ENCODE measurements at regions of chr21 and their contacts with region 1.

Region 1: DNA sequence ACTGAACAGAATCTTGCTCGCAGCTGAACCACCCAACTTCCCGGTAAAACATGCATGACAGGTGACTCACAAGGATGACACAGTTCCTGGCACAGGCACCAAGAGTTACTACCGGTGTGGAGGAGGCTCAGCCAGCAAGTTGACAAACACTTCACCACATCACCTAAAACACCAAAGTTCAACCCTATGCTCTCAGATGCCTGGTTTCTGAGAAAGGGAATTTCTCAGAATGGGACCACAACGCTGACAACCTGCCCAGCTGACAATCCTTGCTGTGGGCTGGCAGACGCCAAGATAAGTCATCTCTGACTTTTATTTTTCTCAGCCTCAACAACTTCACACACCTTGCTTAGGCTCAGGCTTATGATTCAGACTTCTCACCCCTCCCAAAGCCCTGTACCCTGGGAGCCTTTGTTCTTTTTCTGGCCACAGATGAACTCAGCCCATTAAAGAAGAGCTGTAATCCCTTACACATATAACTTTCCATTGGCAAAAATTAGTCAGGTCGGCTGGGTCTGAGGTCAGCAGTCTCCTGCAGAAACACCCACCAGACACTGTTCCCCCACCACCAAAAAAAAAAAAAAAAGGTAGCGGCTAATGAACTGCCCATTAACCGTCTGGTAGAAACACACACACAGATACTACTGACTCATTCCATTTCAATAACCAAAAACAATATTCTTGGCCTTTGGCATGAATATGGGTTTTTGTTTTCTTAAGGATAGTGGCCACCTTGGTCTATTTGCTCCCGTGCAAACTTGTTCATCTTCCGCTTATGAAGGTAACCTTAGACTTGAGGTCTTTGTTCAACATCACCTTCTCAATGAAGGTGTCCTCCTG is 10.8 kb upstream of the TIAM1 start:
- DNase-seq: peak; percentile 88
- ATAC-seq: peak; percentile 88
- H3K4me3 Mint-ChIP-seq: peak overlapping the region; percentile 49
- H3K27ac Mint-ChIP-seq: peak overlapping the region; percentile 82
- H3K4me1 Mint-ChIP-seq: peaks cover 53% of the 10 kb centered on the region
- H3K27me3 Mint-ChIP-seq: no peaks in the 10 kb centered on the region

Region 2: GRCh38 chr21:30718239-30718909 is 636.5 kb before region 1 on chr21 and contains the start of gene KRTAP21-3:
- CTCF ChIA-PET with region 1: no interaction called
- POLR2A ChIA-PET with region 1: no interaction called
- intact Hi-C with region 1: loop called in 1 of 2 experiments (anchors 1 kb)
- DNase-seq: peak; percentile 22
- ATAC-seq: peak; percentile 92
- H3K4me3 Mint-ChIP-seq: no peak within 1 kb of the TSS
- H3K27ac Mint-ChIP-seq: peak within 1 kb of the TSS; percentile 75
- H3K4me1 Mint-ChIP-seq: peaks cover 22% of the 10 kb centered on the region
- H3K27me3 Mint-ChIP-seq: peaks cover 4% of the 10 kb centered on the region
- total RNA-seq, gene KRTAP21-3: not detected

Region 3: DNA sequence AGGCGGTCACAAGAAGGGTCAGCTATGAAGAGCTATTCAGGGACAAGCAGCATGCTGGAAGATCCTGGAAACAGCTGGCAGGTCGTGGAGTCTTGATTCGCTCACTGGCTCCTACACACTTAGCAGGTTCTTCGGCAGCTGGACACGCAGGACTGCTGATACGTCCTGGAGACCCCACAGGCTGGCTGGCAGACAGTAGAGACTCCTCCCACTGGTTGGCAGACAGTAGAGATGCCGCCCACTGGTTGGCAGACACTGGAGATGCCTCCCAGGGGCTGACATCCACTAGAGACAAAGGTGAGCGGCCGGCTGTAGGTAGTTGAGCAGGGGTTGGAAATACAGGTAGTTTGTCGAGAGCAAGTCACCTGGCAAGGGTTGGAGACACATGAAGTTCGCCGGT is 473.9 kb before region 1 on chr21:
- CTCF ChIA-PET with region 1: no interaction called
- POLR2A ChIA-PET with region 1: no interaction called
- intact Hi-C with region 1: no loop called
- DNase-seq: no peak
- ATAC-seq: no peak
- H3K4me3 Mint-ChIP-seq: no peak overlapping the region
- H3K27ac Mint-ChIP-seq: no peak overlapping the region
- H3K4me1 Mint-ChIP-seq: no peaks in the 10 kb centered on the region
- H3K27me3 Mint-ChIP-seq: peaks cover 3% of the 10 kb centered on the region

Region 4: GRCh38 chr21:31198575-31198974 is 156.2 kb before region 1 on chr21:
- CTCF ChIA-PET with region 1: no interaction called
- POLR2A ChIA-PET with region 1: interaction called, 4 read pairs
- intact Hi-C with region 1: loop called (anchors 1 kb)
- DNase-seq: no peak
- ATAC-seq: peak; percentile 47
- H3K4me3 Mint-ChIP-seq: no peak overlapping the region
- H3K27ac Mint-ChIP-seq: no peak overlapping the region
- H3K4me1 Mint-ChIP-seq: peaks cover 50% of the 10 kb centered on the region
- H3K27me3 Mint-ChIP-seq: no peaks in the 10 kb centered on the region

Region 5: GRCh38 chr21:31335957-31336738 is 18.7 kb before region 1 on chr21:
- CTCF ChIA-PET with region 1: no interaction called
- POLR2A ChIA-PET with region 1: interaction called, 10 read pairs
- intact Hi-C with region 1: loop called (anchors 1 kb)
- DNase-seq: peak; percentile 70
- ATAC-seq: peak; percentile 81
- H3K4me3 Mint-ChIP-seq: no peak overlapping the region
- H3K27ac Mint-ChIP-seq: peak overlapping the region; percentile 71
- H3K4me1 Mint-ChIP-seq: peaks cover 73% of the 10 kb centered on the region
- H3K27me3 Mint-ChIP-seq: no peaks in the 10 kb centered on the region

Region 6: GRCh38 chr21:31509194-31510017 is 154.6 kb after region 1 on chr21:
- CTCF ChIA-PET with region 1: no interaction called
- POLR2A ChIA-PET with region 1: no interaction called
- intact Hi-C with region 1: loop called (anchors 1 to 5 kb)
- DNase-seq: peak; percentile 93
- ATAC-seq: peak; percentile 91
- H3K4me3 Mint-ChIP-seq: peak overlapping the region; percentile 49
- H3K27ac Mint-ChIP-seq: peak overlapping the region; percentile 78
- H3K4me1 Mint-ChIP-seq: peaks cover 34% of the 10 kb centered on the region
- H3K27me3 Mint-ChIP-seq: peaks cover 2% of the 10 kb centered on the region

Region 7: GRCh38 chr21:31665397-31665796 is 310.6 kb after region 1 on chr21:
- CTCF ChIA-PET with region 1: no interaction called
- POLR2A ChIA-PET with region 1: interaction called, 3 read pairs
- intact Hi-C with region 1: loop called in 1 of 2 experiments (anchors 5 kb)
- DNase-seq: peak; percentile 71
- ATAC-seq: peak; percentile 71
- H3K4me3 Mint-ChIP-seq: peak overlapping the region; percentile 30
- H3K27ac Mint-ChIP-seq: peak overlapping the region; percentile 78
- H3K4me1 Mint-ChIP-seq: peaks cover 95% of the 10 kb centered on the region
- H3K27me3 Mint-ChIP-seq: no peaks in the 10 kb centered on the region

Region 8: DNA sequence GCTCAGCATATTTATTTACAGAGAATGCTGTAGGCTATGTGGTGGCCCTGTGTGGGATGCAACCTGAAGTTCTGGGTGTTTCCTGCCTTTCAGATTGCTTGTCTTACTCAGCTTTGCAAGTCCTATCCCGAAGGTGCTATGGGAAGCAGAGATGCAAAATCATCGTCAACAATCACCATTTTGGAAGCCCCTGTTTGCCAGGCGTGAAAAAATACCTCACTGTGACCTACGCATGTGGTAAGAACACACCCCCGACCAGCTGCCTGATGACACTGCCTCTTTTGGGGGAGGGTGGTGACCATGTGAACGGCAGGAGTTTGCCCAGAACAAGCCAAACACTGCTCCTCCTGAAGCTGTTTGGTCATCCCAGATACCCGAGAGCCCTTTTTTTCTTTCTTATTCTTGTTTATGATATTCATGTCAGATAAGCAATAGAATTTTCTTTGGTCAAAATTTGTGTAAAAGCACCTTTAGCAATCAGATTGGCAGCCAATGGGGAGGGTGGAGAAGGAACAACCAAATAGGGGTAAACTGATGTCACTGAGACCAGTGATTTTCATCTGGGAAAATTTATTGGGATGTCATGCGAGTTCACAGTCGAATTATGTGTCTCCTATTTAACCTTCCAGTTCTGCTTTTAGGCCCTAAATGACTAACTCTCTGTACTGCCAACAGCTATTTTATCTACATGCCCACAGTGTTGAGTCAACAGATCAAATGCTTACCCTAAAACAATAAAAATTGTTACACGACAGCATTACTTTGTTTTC is 1140.3 kb after region 1 on chr21:
- CTCF ChIA-PET with region 1: no interaction called
- POLR2A ChIA-PET with region 1: no interaction called
- intact Hi-C with region 1: loop called in 1 of 2 experiments (anchors 5 kb)
- DNase-seq: no peak
- ATAC-seq: no peak
- H3K4me3 Mint-ChIP-seq: no peak overlapping the region
- H3K27ac Mint-ChIP-seq: no peak overlapping the region
- H3K4me1 Mint-ChIP-seq: peaks cover 30% of the 10 kb centered on the region
- H3K27me3 Mint-ChIP-seq: no peaks in the 10 kb centered on the region